T-cell (primary cell): ENCODE measurements at regions of chr21 and their contacts with region 1.

Region 1: DNA sequence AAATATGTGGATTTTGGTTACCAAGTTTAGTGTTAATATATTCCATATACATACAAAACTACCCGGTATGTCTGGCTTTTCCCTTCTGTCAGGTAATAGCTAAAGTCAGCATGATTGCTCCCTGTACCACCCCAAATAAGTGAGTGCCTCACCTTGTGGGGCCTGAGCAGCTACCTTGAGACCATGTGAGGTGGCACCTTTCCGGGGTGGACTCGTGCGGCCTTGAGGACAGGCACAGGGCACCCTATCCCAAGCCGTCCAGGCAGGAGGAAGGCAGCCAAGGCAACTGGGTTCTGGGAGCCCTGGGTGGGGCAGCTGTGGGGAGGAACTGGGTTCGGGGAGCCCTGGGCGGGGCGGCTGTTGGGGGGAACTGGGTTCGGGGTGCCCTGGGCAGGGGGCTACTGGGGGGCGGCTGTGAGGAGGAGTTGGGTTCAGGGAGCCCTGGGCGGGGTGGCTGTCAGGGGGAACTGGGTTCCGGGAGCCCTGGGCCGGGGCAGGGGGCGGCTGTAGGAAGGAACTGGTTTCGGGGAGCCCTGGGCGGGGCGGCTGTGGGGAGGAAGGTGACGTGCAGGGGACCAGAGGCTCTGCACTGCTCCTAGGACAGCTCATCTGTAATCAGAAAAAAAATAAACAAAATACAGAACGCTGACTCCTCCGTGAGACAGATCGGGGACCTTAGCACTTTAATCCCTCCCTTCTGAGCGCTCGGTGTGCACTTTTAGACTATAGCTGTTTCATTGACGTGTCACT is 63.3 kb downstream of the POFUT2 start:
- DNase-seq: peak in 33 of 35 experiments; percentile 20 to 79 (median 56)
- ATAC-seq: peak; percentile 45 to 81 (median 70)
- H3K4me3 ChIP-seq: no peak overlapping the region
- H3K4me3 Mint-ChIP-seq: peak overlapping the region; percentile 28 to 67 (median 63)
- H3K27ac ChIP-seq: peak overlapping the region; percentile 65
- H3K27ac Mint-ChIP-seq: peak overlapping the region; percentile 85 to 91
- H3K4me1 ChIP-seq: peaks cover 0 to 50% of the 10 kb centered on the region in 2 experiments
- H3K4me1 Mint-ChIP-seq: peaks cover 26 to 52% (median 46%) of the 10 kb centered on the region in 3 donors
- H3K27me3 ChIP-seq: no peaks in the 10 kb centered on the region
- H3K27me3 Mint-ChIP-seq: no peaks in the 10 kb centered on the region

Region 2: GRCh38 chr21:44817506-44817880 is 406.9 kb before region 1 on chr21:
- CTCF ChIA-PET with region 1: no interaction called
- POLR2A ChIA-PET with region 1: no interaction called
- DNase-seq: peak; percentile 73 to 96 (median 84)
- ATAC-seq: peak; percentile 86 to 94 (median 89)
- H3K4me3 ChIP-seq: peak overlapping the region; percentile 55 to 57
- H3K4me3 Mint-ChIP-seq: peak overlapping the region; percentile 66 to 76 (median 69)
- H3K27ac ChIP-seq: no peak overlapping the region
- H3K27ac Mint-ChIP-seq: no peak overlapping the region
- H3K4me1 ChIP-seq: peaks cover 0 to 29% of the 10 kb centered on the region in 2 experiments
- H3K4me1 Mint-ChIP-seq: peaks cover 16 to 18% (median 18%) of the 10 kb centered on the region in 3 donors
- H3K27me3 ChIP-seq: no peaks in the 10 kb centered on the region
- H3K27me3 Mint-ChIP-seq: no peaks in the 10 kb centered on the region

Region 3: GRCh38 chr21:45078877-45079281 is 145.5 kb before region 1 on chr21:
- CTCF ChIA-PET with region 1: interaction called in 1 of 2 experiments, 11 read pairs
- POLR2A ChIA-PET with region 1: no interaction called
- DNase-seq: peak; percentile 38 to 90 (median 74)
- ATAC-seq: peak; percentile 69 to 86 (median 76)
- H3K4me3 ChIP-seq: no peak overlapping the region
- H3K4me3 Mint-ChIP-seq: peak overlapping the region; percentile 32 to 71 (median 53)
- H3K27ac ChIP-seq: peak overlapping the region; percentile 81
- H3K27ac Mint-ChIP-seq: peak overlapping the region; percentile 97 to 98
- H3K4me1 ChIP-seq: peaks cover 69 to 74% of the 10 kb centered on the region in 2 experiments
- H3K4me1 Mint-ChIP-seq: peaks cover 82 to 83% (median 83%) of the 10 kb centered on the region in 3 donors
- H3K27me3 ChIP-seq: no peaks in the 10 kb centered on the region
- H3K27me3 Mint-ChIP-seq: no peaks in the 10 kb centered on the region

Region 4: GRCh38 chr21:45192332-45192731 is 32.0 kb before region 1 on chr21:
- CTCF ChIA-PET with region 1: no interaction called
- POLR2A ChIA-PET with region 1: no interaction called
- DNase-seq: no peak
- ATAC-seq: no peak
- H3K4me3 ChIP-seq: no peak overlapping the region
- H3K4me3 Mint-ChIP-seq: no peak overlapping the region
- H3K27ac ChIP-seq: no peak overlapping the region
- H3K27ac Mint-ChIP-seq: no peak overlapping the region
- H3K4me1 ChIP-seq: no peaks in the 10 kb centered on the region
- H3K4me1 Mint-ChIP-seq: no peaks in the 10 kb centered on the region
- H3K27me3 ChIP-seq: no peaks in the 10 kb centered on the region
- H3K27me3 Mint-ChIP-seq: no peaks in the 10 kb centered on the region

Region 5: DNA sequence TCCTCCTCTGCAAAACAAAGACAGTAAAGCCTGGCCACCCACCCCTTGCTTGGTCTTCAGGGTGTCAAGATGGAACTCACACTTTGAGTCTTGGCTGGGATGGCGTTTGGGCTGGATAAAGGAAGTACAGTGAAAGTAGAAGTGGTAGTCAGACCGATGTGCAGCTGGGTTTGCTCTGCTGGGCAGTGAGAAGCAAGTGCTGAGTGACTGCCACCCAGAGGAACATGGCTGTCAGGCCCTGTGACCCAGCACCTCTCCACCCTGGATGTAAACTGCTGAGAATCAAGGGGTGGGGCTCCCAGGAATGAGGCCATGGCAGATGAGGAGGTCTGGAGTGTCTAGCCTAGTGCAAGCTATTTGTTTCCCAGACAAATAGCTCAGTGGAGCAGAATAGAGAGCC is 12.1 kb after region 1 on chr21:
- CTCF ChIA-PET with region 1: no interaction called
- POLR2A ChIA-PET with region 1: no interaction called
- DNase-seq: peak in 1 of 35 experiments; percentile 24
- ATAC-seq: no peak
- H3K4me3 ChIP-seq: no peak overlapping the region
- H3K4me3 Mint-ChIP-seq: no peak overlapping the region
- H3K27ac ChIP-seq: no peak overlapping the region
- H3K27ac Mint-ChIP-seq: no peak overlapping the region
- H3K4me1 ChIP-seq: peaks cover 2 to 9% of the 10 kb centered on the region in 2 experiments
- H3K4me1 Mint-ChIP-seq: peaks cover 0 to 11% (median 0%) of the 10 kb centered on the region in 3 donors
- H3K27me3 ChIP-seq: peaks cover 2 to 25% of the 10 kb centered on the region in 2 experiments
- H3K27me3 Mint-ChIP-seq: peaks cover 9 to 39% of the 10 kb centered on the region in 2 donors